ENCODE measurements at regions of chr11 and their contacts with region 1.

Region 1: DNA sequence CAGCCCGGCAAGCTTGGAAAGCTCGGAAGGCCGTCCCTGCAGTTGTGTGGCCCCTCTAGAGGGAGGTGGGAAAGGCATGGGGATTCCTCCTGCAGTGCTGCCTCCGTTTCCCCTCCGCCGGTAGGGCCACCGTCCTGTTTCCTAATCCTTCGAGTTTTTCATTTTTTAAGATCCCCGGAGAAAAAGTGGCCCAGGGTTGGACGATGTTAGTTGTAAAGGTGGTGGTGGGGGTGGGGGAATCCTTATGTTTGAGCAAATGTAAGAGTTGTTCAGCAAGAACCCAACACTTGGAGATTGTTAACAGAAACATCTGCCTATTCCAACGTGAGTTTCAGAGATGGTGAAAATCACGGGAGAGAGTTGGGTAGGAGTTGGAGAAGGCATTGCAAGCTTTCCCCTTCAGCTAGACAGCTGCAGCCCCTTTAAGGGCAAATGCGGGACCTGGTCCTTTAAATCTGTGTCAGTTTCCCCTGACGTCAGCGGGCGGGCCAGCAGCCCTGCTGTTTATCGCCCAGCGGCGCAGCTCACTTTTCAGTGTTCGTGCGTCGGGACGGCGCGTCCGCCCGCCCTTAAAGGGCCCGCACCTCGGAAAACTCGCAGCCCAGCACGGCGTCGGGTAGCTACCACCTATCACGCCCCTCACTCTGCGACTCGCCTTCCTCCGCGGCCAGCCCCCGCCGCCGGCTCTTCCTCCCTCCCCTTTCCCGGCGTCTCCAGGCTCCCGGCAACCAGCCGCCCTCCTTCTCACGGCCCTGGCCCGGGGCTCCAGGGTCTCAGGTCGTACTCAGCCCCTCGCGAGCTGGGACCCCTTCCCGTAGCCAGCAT is at the start of gene SIDT2:
- DNase-seq: peak; percentile 92
- ATAC-seq: peak; percentile 88
- H3K4me3 ChIP-seq: peak within 1 kb of the TSS; percentile 68 to 85 (median 81)
- H3K4me3 Mint-ChIP-seq: peak within 1 kb of the TSS; percentile 99
- H3K27ac ChIP-seq: peak within 1 kb of the TSS; percentile 84
- H3K27ac Mint-ChIP-seq: peak within 1 kb of the TSS; percentile 96
- H3K4me1 ChIP-seq: peaks cover 27 to 39% of the 10 kb centered on the region in 2 donors
- H3K4me1 Mint-ChIP-seq: peaks cover 36% of the 10 kb centered on the region
- H3K27me3 ChIP-seq: no peaks in the 10 kb centered on the region
- H3K27me3 Mint-ChIP-seq: no peaks in the 10 kb centered on the region
- CTCF ChIP-seq: no peak
- total RNA-seq, gene SIDT2: 241 and 245 TPM in 2 replicates

Region 2: GRCh38 chr11:117189191-117189930 is 10.9 kb after region 1 on chr11:
- CTCF ChIA-PET with region 1: interaction called, 12 read pairs
- POLR2A ChIA-PET with region 1: interaction called, 33 read pairs
- intact Hi-C with region 1: loop called (anchors 1 kb)
- DNase-seq: peak; percentile 95
- ATAC-seq: peak; percentile 86
- H3K4me3 ChIP-seq: peak overlapping the region in 4 of 5 experiments; percentile 15 to 53 (median 32)
- H3K4me3 Mint-ChIP-seq: peak overlapping the region; percentile 80
- H3K27ac ChIP-seq: peak overlapping the region; percentile 90 to 91
- H3K27ac Mint-ChIP-seq: peak overlapping the region; percentile 98
- H3K4me1 ChIP-seq: peaks cover 56 to 77% of the 10 kb centered on the region in 2 donors
- H3K4me1 Mint-ChIP-seq: peaks cover 68% of the 10 kb centered on the region
- H3K27me3 ChIP-seq: no peaks in the 10 kb centered on the region
- H3K27me3 Mint-ChIP-seq: no peaks in the 10 kb centered on the region
- CTCF ChIP-seq: no peak

Region 3: GRCh38 chr11:117197516-117198456 is 19.4 kb after region 1 on chr11:
- CTCF ChIA-PET with region 1: interaction called, 26 read pairs
- POLR2A ChIA-PET with region 1: no interaction called
- intact Hi-C with region 1: no loop called
- DNase-seq: no peak
- ATAC-seq: peak; percentile 14
- H3K4me3 ChIP-seq: no peak overlapping the region
- H3K4me3 Mint-ChIP-seq: no peak overlapping the region
- H3K27ac ChIP-seq: no peak overlapping the region
- H3K27ac Mint-ChIP-seq: peak overlapping the region; percentile 75
- H3K4me1 ChIP-seq: peaks cover 15 to 37% of the 10 kb centered on the region in 2 donors
- H3K4me1 Mint-ChIP-seq: peaks cover 33% of the 10 kb centered on the region
- H3K27me3 ChIP-seq: no peaks in the 10 kb centered on the region
- H3K27me3 Mint-ChIP-seq: no peaks in the 10 kb centered on the region
- CTCF ChIP-seq: no peak

Region 4: GRCh38 chr11:117226388-117227385 is 48.3 kb after region 1 on chr11:
- CTCF ChIA-PET with region 1: interaction called, 309 read pairs
- POLR2A ChIA-PET with region 1: interaction called, 12 read pairs
- intact Hi-C with region 1: loop called (anchors 1 kb)
- DNase-seq: peak; percentile 86
- ATAC-seq: peak; percentile 70
- H3K4me3 ChIP-seq: no peak overlapping the region
- H3K4me3 Mint-ChIP-seq: no peak overlapping the region
- H3K27ac ChIP-seq: no peak overlapping the region
- H3K27ac Mint-ChIP-seq: peak overlapping the region; percentile 74
- H3K4me1 ChIP-seq: peaks cover 26 to 37% of the 10 kb centered on the region in 2 donors
- H3K4me1 Mint-ChIP-seq: peaks cover 35% of the 10 kb centered on the region
- H3K27me3 ChIP-seq: no peaks in the 10 kb centered on the region
- H3K27me3 Mint-ChIP-seq: no peaks in the 10 kb centered on the region
- CTCF ChIP-seq: peak; percentile 84

Region 5: DNA sequence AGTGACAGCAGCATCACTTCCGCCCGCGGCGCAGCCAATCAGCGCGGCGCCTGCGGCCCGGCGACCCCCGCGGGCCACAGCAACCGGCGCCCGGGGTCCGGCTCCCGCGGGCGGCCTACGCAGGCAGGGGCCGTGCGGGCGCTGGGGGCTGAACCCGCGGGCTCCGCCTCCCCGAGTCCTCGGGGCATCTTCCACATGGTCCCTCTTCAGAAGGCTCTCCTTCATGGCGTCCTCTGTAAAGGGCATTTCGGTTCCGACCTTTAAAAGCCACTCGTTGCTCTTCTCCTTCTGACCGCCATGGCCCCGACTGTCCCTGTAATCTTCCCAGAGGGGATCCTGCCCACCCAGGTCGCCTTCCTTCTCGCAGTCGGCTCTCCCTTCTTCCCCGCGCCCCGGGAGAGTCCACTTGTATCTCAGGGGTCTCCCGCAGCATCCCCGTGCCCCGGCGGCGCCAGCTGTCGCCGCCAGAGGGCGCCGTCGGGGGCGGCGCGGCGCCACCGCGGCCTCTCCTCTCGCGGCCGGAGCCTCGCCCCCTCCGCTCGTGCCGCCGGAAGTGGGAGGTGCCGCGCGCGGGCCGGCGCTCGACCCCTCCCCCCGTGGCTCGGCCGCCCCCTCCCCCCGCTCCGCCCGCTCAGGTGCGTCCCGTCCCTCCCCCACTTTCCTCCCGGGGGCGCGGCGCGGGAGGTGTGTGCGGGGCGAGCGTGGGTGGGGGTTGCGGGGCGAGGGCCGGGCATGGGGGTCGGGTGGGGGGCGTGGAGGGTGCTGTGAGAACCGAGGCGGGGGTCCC is 53.9 kb after region 1 on chr11 and contains the start of gene RNF214:
- CTCF ChIA-PET with region 1: interaction called, 309 read pairs
- POLR2A ChIA-PET with region 1: interaction called, 12 read pairs
- intact Hi-C with region 1: loop called (anchors 1 kb)
- DNase-seq: peak; percentile 89
- ATAC-seq: peak; percentile 78
- H3K4me3 ChIP-seq: peak within 1 kb of the TSS; percentile 64 to 99 (median 91)
- H3K4me3 Mint-ChIP-seq: peak within 1 kb of the TSS; percentile 95
- H3K27ac ChIP-seq: peak within 1 kb of the TSS; percentile 82 to 84
- H3K27ac Mint-ChIP-seq: peak within 1 kb of the TSS; percentile 99
- H3K4me1 ChIP-seq: peaks cover 34 to 38% of the 10 kb centered on the region in 2 donors
- H3K4me1 Mint-ChIP-seq: peaks cover 48% of the 10 kb centered on the region
- H3K27me3 ChIP-seq: no peaks in the 10 kb centered on the region
- H3K27me3 Mint-ChIP-seq: no peaks in the 10 kb centered on the region
- CTCF ChIP-seq: peak; percentile 83
- total RNA-seq, gene RNF214: 33.6 and 36.1 TPM in 2 replicates